Stomach (tissue), 19 donors: ENCODE measurements at regions of chr10 and their contacts with region 1.

Region 1: GRCh38 chr10:132458593-132459300 is 61.7 kb downstream of the PWWP2B start:
- DNase-seq: peak; percentile 71 to 83
- H3K4me3 ChIP-seq: no peak overlapping the region
- H3K27ac ChIP-seq: peak overlapping the region; percentile 25 to 73 (median 61)
- H3K4me1 ChIP-seq: peaks cover 41 to 80% (median 67%) of the 10 kb centered on the region in 4 donors
- H3K27me3 ChIP-seq: peaks cover 0 to 10% (median 0%) of the 10 kb centered on the region in 3 donors
- CTCF ChIP-seq: peak in 6 of 7 experiments; percentile 27 to 99 (median 94)
- EP300 ChIP-seq: no peak
- POLR2A ChIP-seq: no peak

Region 2: GRCh38 chr10:132319853-132320669 is 138.7 kb before region 1 on chr10:
- intact Hi-C with region 1: no loop called
- DNase-seq: peak in 1 of 2 donors; percentile 28
- H3K4me3 ChIP-seq: no peak overlapping the region
- H3K27ac ChIP-seq: peak overlapping the region in 1 of 5 donors; percentile 17
- H3K4me1 ChIP-seq: no peaks in the 10 kb centered on the region
- H3K27me3 ChIP-seq: no peaks in the 10 kb centered on the region
- CTCF ChIP-seq: no peak
- EP300 ChIP-seq: no peak
- POLR2A ChIP-seq: no peak

Region 3: GRCh38 chr10:132536971-132537712 is 78.4 kb after region 1 on chr10:
- intact Hi-C with region 1: loop called (anchors 10 kb)
- DNase-seq: peak; percentile 100
- H3K4me3 ChIP-seq: peak overlapping the region; percentile 75 to 80 (median 78)
- H3K27ac ChIP-seq: peak overlapping the region; percentile 87 to 96 (median 92)
- H3K4me1 ChIP-seq: peaks cover 49 to 59% (median 55%) of the 10 kb centered on the region in 4 donors
- H3K27me3 ChIP-seq: no peaks in the 10 kb centered on the region
- CTCF ChIP-seq: peak in 2 of 7 experiments; percentile 34 to 40
- EP300 ChIP-seq: no peak
- POLR2A ChIP-seq: no peak

Region 4: GRCh38 chr10:132571650-132572535 is 113.1 kb after region 1 on chr10:
- intact Hi-C with region 1: no loop called
- DNase-seq: peak; percentile 66
- H3K4me3 ChIP-seq: no peak overlapping the region
- H3K27ac ChIP-seq: peak overlapping the region; percentile 5 to 64 (median 40)
- H3K4me1 ChIP-seq: peaks cover 42 to 59% (median 54%) of the 10 kb centered on the region in 4 donors
- H3K27me3 ChIP-seq: no peaks in the 10 kb centered on the region
- CTCF ChIP-seq: no peak
- EP300 ChIP-seq: no peak
- POLR2A ChIP-seq: no peak

Region 5: DNA sequence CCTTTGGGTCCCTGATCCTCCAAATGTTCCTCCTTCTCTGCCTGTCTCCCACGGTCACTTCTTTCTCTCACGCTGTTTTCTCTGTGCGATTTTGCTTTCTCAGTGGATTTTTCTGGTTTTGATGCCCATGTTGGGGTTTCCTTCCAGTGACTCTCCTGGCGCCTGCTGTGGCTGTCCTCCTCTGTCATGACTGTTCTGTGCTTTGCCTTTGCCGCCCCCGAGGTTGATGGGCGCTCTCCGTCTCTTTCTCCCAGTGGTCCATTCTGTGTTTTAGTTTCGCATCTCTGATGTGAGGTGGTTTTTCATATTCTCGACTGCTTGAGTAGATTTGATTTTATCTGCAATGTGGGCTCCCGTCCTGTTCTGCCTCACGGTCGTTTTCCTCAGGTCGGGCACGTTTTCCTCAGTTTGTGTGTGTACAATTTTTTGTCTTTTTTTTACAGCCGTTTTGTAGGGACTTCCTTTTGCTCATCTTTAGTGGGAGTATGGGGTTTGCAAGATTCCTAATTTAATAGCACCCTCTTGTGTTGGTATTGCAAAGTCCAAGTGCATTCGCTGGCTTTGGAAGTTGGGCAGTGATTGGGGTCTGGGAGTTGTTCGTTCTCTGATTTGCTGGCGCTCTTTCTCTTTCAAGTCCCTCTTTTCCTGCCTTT is 178.9 kb after region 1 on chr10:
- intact Hi-C with region 1: loop called (anchors 5 kb)
- DNase-seq: peak in 1 of 2 donors; percentile 86
- H3K4me3 ChIP-seq: no peak overlapping the region
- H3K27ac ChIP-seq: peak overlapping the region in 1 of 5 donors; percentile 28
- H3K4me1 ChIP-seq: peaks cover 12 to 71% (median 42%) of the 10 kb centered on the region in 4 donors
- H3K27me3 ChIP-seq: no peaks in the 10 kb centered on the region
- CTCF ChIP-seq: peak in 5 of 7 experiments; percentile 57 to 84 (median 65)
- EP300 ChIP-seq: no peak
- POLR2A ChIP-seq: no peak